Common myeloid progenitor, CD34-positive (primary cell): ENCODE measurements at regions of chr5 and their contacts with region 1.

Region 1: DNA sequence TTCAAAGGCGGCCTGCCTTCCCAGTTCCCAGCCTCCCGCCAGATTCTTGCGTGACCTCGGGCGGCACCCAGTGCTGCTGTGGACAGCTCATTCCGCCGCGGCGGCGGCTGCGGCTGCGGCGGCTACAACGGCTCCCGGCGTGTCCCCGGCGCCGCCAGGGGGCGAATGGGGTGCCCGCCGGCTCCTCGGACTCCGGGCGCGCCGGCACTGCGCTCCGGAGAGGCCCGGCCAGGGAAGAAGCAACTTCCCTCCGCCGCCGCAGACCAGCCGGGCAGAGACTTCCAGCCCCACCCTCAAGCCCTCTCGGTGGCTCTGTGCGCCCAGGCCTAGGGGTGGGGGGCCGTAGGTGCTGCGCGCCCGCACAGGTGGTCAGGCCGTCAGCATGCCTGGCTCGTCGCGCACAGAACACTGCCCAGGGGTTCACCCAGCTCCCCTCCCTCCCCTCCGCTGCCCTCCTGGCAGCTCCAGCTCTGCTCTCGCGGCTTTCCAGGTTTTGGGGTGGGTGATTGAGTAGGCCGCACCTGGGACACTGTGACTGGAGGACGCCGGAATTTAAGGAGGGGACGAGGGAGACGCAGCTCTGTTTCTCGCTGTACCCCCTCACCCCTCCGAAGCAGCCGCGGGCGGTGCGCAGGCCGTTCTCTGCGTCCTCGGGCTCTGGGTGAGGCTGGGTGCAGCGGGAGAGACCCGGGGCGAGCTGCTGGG is 20.2 kb downstream of the IGIP start:
- DNase-seq: peak; percentile 61 to 83 (median 80)
- H3K4me3 ChIP-seq: peak overlapping the region; percentile 18 to 79 (median 58)
- H3K27ac ChIP-seq: no peak overlapping the region
- H3K4me1 ChIP-seq: peaks cover 0 to 14% (median 12%) of the 10 kb centered on the region in 4 experiments
- H3K27me3 ChIP-seq: peaks cover 2 to 39% (median 26%) of the 10 kb centered on the region in 5 experiments

Region 2: GRCh38 chr5:140073296-140073695 is 72.7 kb before region 1 on chr5:
- CTCF ChIA-PET with region 1: interaction called, 142 read pairs
- POLR2A ChIA-PET with region 1: no interaction called
- DNase-seq: peak; percentile 29 to 60 (median 48)
- H3K4me3 ChIP-seq: no peak overlapping the region
- H3K27ac ChIP-seq: no peak overlapping the region
- H3K4me1 ChIP-seq: no peaks in the 10 kb centered on the region
- H3K27me3 ChIP-seq: peaks cover 0 to 12% (median 8%) of the 10 kb centered on the region in 5 experiments

Region 3: DNA sequence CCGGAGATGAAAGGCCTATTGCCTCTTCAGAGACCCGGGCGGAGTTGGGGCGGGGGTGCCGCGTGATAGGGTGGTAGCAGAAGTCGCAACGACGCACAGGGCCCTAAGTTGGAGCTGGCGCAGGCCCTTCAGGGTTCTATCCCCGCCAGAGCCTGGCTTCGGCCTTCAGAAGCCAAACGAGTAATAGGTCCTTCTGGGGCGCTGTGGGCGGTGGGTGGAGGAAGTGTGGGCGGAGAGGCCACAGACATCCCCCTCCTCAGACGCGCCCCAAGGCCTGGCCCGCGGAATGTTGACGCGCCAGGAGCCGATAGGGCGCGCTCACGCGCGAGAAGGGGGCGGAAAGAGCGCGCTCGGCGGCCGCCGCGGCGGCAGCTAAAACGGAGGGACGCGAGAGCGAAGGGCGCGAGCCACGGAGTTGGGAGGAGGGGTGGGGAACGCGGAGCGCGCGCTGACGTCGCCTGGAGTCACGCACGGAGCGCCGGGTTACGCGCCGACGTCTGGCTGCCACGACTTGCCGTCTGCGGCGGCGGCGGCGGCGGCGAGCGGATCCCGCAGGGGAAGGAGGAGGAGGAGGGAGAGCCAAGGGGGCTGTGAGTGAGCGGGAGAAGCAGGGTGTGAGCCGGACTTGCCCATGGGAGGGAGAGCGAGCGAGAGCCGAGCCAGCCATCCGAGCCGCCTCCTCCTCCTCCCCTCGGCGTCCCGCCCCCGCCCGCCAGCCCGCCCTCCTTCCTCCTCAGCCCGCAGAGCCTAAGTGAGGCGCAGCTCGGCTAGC is 38.5 kb before region 1 on chr5:
- CTCF ChIA-PET with region 1: interaction called, 17 read pairs
- POLR2A ChIA-PET with region 1: no interaction called
- DNase-seq: peak; percentile 93 to 97 (median 95)
- H3K4me3 ChIP-seq: peak overlapping the region; percentile 51 to 86 (median 67)
- H3K27ac ChIP-seq: peak overlapping the region; percentile 53 to 91
- H3K4me1 ChIP-seq: peaks cover 3 to 40% (median 32%) of the 10 kb centered on the region in 4 experiments
- H3K27me3 ChIP-seq: peaks cover 17 to 40% (median 28%) of the 10 kb centered on the region in 5 experiments

Region 4: DNA sequence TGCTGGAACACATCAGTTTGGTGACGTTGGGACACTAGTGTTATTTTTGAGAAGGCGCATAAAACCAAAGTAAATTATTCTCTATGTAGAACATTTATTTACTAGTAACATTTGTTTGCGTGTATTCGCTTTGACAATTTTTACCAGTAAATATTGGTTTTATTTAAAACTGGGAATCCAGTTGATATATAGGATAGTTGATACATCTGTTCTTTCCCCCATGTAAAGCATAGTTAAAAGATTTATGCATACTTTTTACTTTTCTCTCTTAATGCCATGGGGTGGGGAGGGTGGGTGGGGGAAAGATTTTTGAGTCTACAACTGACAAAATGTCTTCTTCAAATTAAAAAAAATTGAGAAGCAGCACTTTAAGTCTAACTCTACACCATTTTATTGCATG is 20.3 kb before region 1 on chr5 and contains the start of gene IGIP:
- CTCF ChIA-PET with region 1: interaction called, 62 read pairs
- POLR2A ChIA-PET with region 1: no interaction called
- DNase-seq: no peak
- H3K4me3 ChIP-seq: no peak within 1 kb of the TSS
- H3K27ac ChIP-seq: no peak within 1 kb of the TSS
- H3K4me1 ChIP-seq: peaks cover 0 to 4% (median 0%) of the 10 kb centered on the region in 4 experiments
- H3K27me3 ChIP-seq: peaks cover 0 to 3% (median 0%) of the 10 kb centered on the region in 5 experiments

Region 5: DNA sequence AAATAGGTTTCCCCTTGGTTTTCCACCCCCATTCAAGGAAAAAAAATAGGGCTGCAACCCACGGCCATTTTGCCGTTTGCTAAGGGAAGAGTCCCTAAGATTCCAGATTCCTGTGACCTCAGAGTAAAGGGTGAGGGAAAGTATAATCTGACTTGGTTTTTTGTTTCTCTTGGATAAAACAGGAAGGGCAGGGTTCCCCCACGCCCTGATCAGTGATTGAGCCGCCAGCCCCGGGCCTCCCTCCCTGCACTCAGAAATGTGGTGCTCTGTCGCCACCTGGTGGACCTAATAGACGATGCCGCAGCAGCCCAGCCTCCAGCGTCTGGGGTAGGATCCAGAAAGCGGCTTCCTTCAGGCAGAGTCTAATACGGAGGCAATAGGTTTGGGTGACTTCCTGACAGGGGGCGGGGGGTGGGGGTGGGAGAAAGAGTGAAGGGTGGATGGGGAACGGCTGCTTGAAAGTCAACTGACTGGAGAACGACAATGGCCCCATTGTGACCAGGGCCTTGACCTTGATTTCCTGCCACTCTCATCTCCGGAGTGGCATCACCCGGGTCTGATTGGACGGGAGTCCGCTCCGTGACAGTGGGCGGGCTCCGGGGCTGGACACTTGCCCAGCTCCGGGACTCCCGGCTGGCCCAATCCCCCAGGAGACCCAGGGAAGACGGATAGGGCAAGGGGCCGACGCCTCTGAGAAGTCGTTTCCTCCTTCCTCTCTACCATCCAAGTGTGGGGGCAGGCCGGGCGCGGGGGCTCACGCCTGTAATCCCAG is 11.2 kb after region 1 on chr5:
- CTCF ChIA-PET with region 1: interaction called, 105 read pairs
- POLR2A ChIA-PET with region 1: no interaction called
- DNase-seq: peak; percentile 81 to 91 (median 87)
- H3K4me3 ChIP-seq: peak overlapping the region in 3 of 7 experiments; percentile 50 to 69 (median 55)
- H3K27ac ChIP-seq: no peak overlapping the region
- H3K4me1 ChIP-seq: peaks cover 0 to 17% (median 10%) of the 10 kb centered on the region in 4 experiments
- H3K27me3 ChIP-seq: peaks cover 0 to 7% (median 0%) of the 10 kb centered on the region in 5 experiments